Thyroid gland (tissue), 4 donors: ENCODE measurements at regions of chr3 and their contacts with region 1.

Region 1: DNA sequence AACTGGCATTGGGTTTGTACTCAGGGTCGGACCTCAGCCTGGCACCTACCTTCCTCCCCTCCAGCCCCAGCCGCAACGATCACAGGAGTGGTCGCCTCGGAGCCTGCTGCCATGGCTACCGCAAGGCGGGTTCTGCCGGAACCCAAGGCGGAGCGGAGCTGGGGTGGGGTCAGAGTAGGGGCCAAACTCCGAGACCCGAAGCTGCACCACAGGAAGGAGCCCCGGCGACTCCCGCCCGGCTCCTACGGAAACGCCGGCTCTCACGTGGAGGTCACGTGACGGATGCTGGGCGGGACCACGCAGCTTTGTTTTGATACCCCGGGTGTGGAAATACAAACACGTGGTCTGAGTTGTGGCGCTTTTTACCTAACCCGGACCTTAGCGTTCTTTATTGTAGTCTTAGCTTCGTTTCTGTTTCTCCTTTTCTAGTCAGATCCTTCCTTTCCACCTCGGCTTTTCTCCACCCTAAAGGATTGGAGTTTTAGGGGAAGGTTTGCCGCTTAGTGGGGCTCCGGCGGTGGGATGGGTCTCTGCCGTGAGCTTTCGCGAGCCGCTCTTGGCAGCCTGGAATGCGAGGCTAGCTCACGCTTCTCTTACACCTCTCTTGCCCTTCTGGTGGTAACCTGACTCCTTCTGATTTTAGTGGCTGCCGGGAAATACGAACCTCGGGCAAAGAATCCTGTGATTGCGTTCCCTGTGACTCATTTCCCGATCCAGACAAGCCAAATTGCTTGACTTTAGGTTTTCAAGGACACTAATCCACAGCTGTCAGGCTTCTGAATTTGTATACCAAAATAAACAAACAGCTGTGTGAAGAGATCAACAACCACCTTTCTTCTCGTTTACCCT is at the start of gene HSPBAP1:
- DNase-seq: peak; percentile 95
- H3K4me3 ChIP-seq: peak within 1 kb of the TSS; percentile 45 to 94 (median 65)
- H3K27ac ChIP-seq: peak within 1 kb of the TSS; percentile 90 to 95 (median 93)
- H3K4me1 ChIP-seq: peaks cover 6 to 10% of the 10 kb centered on the region in 2 donors
- H3K27me3 ChIP-seq: no peaks in the 10 kb centered on the region
- CTCF ChIP-seq: no peak
- POLR2A ChIP-seq: peak in 1 of 2 donors; percentile 75
- total RNA-seq, gene HSPBAP1: 12.4 to 17.3 (median 15.8) TPM

Region 2: DNA sequence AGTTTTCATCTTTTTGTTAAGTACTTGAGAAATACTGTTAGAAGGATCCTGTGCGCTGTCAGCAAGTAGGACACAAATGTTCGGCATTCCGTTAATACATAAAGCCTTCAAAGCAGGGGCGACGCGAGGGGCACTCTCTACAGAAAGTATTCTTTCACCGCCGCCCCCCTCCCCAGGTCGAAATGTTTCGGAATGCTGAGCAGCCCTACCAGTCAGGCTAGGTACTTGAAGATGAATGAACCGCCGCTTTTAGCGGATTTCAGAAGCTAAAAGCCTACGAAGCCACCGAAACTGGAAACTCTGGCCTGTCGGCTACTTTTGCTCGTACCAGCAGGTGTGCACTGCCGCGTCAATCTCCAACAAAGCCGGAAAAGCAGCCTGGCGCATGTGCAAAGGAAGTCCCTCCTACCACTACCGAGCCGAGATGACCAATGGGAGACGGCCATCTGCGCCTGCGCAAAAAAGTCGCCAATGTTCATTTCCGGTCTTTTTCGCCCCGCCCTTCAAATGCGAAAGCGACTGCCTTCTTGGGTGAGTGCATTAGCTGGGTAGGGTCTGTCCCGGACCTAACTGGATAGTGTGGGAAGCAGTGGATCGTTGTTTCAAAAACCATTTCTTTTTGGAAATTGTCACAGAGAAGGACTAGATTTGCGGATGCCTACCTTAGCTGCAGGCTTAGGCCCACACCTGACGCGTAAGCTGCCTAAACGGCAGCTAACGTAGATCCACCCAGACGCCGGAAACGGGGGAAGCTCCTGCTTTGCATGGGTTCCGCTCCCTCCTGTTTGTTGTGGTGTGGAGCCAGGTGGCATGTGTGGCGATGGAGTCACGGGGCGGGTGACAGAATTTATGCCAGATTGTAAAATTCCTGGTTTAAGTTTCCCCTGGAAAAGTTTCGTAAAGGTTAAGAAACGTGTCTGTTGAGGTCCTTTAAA is 377.8 kb before region 1 on chr3 and contains the start of gene WDR5B:
- intact Hi-C with region 1: loop called (anchors 10 kb)
- DNase-seq: peak; percentile 96 to 98
- H3K4me3 ChIP-seq: peak within 1 kb of the TSS; percentile 6 to 69 (median 63)
- H3K27ac ChIP-seq: peak within 1 kb of the TSS; percentile 80 to 92 (median 88)
- H3K4me1 ChIP-seq: peaks cover 11 to 21% of the 10 kb centered on the region in 2 donors
- H3K27me3 ChIP-seq: no peaks in the 10 kb centered on the region
- CTCF ChIP-seq: peak in 2 of 6 experiments; percentile 23 to 29
- POLR2A ChIP-seq: peak; percentile 26 to 91
- total RNA-seq, gene WDR5B: 8.6 to 10.7 (median 9.3) TPM

Region 3: DNA sequence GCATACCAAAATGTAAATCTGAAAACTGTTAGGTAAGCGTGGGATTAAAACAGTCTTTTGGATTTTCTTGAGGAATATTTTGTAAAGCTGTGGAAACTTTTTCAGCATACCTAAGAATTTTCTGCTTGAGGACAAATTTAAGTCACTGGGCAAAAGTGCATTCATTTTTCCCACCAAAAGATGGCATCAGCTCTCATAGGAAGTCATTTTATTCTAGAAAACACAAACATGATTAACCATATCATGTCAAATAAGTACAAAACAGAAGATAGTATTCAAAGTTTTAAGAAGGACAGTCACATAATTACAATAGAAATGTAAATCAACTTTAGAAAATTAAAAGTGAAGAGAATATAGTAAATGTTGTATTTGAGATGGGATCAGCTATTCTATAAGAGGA is 64.6 kb after region 1 on chr3:
- intact Hi-C with region 1: no loop called
- DNase-seq: no peak
- H3K4me3 ChIP-seq: no peak overlapping the region
- H3K27ac ChIP-seq: no peak overlapping the region
- H3K4me1 ChIP-seq: no peaks in the 10 kb centered on the region
- H3K27me3 ChIP-seq: no peaks in the 10 kb centered on the region
- CTCF ChIP-seq: peak in 2 of 6 experiments; percentile 25 to 27
- POLR2A ChIP-seq: no peak